Activated T-helper 1 cell treated with anti-CD3 and anti-CD28 coated beads, Interleukin-12 subunit alpha, Interleukin-12 subunit beta, Interleukin-2, Interleukin-4 antibody, amounts not matched to agents 30 ng/mL and 10 ng/mL and 1 ng/mL, durations not matched to agents 14 hours and 24 hours and 36 hours (primary cell): ENCODE measurements at regions of chr12 and their contacts with region 1.

Region 1: DNA sequence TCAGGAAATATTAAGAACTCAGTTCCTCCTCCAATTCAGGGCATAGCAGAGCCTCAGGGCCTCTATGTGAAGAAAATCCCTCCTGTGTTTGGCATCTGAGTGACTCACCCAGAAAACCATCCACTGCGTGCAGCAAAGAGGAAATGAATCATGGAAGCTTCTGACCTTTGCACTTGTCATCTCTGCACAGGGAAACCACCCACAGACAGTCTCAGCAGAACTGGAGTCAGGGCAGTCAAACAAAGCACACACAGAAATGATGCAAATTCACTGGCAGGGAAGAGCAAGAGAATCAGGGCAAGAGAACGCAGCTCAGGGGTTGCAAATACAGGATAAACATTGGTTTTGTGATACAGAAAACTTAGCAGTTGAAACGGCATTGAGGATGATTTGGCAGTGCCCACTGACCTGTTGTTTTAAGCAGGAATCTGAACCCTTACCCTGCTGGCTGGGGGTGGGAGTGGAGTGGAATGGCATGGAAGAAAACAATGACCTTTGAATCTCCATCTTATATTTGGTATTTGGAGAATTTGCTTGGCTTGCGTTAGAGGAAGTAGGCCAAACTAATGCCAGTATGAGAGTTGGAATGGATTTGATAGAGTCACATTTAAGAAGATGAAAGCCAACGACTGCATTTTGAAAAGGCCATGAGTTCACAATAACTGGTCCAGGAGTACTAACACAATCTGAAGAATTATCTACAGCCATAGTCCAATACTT is 53.5 kb downstream of the PHLDA1 start:
- DNase-seq: peak; percentile 81
- H3K4me3 Mint-ChIP-seq: peak overlapping the region; percentile 38
- H3K27ac Mint-ChIP-seq: peak overlapping the region; percentile 94
- H3K4me1 Mint-ChIP-seq: peaks cover 77% of the 10 kb centered on the region
- H3K27me3 Mint-ChIP-seq: no peaks in the 10 kb centered on the region

Region 2: DNA sequence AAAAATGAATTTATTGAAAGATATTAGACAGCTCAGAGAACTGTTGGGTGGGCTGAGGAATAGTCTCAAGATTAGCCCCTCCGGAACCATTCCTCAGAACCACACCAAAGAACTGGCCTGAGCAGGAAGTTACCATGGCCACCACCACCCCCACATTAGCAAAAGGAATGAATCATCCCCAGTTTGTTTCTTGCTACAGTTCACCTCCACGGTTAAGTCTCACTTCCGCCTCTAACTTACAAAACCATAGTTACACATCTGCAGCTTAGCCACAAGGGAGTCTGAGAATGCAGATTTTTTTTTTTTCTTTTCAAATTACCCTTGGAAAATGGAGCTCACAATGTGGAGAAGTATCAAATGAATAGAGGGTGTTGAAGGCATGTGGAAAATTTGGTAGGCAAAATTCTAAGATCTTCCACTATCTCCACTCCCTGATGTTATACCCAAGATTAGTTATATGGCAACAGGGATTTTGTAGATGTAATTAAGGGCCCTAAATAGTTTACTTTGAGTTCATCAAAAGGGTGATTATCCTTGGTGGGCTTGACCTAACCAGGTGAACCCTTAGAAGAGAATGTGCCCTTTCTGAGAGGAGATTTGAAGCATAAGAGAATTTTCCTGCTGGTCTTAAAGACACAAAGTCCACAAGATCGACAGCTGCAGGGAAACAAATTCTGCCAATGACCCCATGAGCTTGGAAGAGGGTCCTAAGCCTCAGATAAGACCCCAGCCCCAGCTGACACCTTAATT is 336.9 kb before region 1 on chr12:
- intact Hi-C with region 1: loop called (anchors 1 kb)
- DNase-seq: peak; percentile 32
- H3K4me3 Mint-ChIP-seq: peak overlapping the region; percentile 19
- H3K27ac Mint-ChIP-seq: peak overlapping the region; percentile 89
- H3K4me1 Mint-ChIP-seq: peaks cover 34% of the 10 kb centered on the region
- H3K27me3 Mint-ChIP-seq: no peaks in the 10 kb centered on the region

Region 3: DNA sequence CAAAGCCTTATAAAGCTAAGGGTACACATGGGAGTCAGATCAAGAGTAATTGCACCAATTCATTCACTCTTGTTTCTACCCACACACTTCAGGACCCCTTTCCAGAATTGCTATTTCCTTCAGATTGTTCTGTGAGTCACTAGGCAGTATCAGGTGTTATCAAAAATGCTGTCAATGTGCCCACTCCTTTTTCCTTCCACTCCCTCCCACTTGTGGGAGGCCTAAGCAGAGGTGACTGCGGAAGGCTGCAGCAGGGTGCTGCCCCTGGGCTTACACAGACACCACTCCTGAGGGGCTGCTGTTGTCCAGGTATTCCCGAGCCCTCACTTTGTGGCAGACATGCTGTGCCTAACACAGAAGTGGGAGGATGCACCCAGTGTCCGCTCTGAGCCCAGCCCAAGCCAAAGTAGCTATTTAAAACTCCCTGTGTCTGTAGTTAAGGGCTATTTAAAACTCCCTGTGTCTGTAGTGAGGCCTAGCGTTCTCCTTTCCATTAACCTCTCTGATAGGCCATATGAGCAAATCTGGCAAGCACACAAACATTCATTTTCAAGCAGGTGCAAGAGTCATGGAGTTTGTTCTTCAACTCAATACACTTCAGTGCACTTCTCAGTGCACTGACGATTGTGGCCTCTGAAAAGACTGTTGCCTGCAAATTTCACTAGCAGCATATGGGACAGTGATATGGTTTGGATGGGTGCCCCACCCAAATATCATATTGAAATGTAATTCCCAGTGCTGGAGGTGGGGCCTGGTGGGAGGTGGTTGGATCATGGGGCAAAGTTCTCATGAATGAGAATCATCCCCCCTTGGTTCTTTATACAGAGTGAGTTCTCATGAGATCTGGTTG is 64.4 kb before region 1 on chr12:
- intact Hi-C with region 1: loop called (anchors 1 kb)
- DNase-seq: no peak
- H3K4me3 Mint-ChIP-seq: no peak overlapping the region
- H3K27ac Mint-ChIP-seq: peak overlapping the region; percentile 79
- H3K4me1 Mint-ChIP-seq: peaks cover 34% of the 10 kb centered on the region
- H3K27me3 Mint-ChIP-seq: peaks cover 1% of the 10 kb centered on the region

Region 4: GRCh38 chr12:75944097-75944904 is 33.8 kb before region 1 on chr12:
- intact Hi-C with region 1: loop called (anchors 1 kb)
- DNase-seq: peak; percentile 27
- H3K4me3 Mint-ChIP-seq: peak overlapping the region; percentile 65
- H3K27ac Mint-ChIP-seq: peak overlapping the region; percentile 98
- H3K4me1 Mint-ChIP-seq: peaks cover 30% of the 10 kb centered on the region
- H3K27me3 Mint-ChIP-seq: no peaks in the 10 kb centered on the region

Region 5: GRCh38 chr12:76031537-76032073 is 53.5 kb after region 1 on chr12 and contains the start of gene PHLDA1:
- intact Hi-C with region 1: loop called (anchors 1 kb)
- DNase-seq: peak; percentile 95
- H3K4me3 Mint-ChIP-seq: peak within 1 kb of the TSS; percentile 99
- H3K27ac Mint-ChIP-seq: peak within 1 kb of the TSS; percentile 99
- H3K4me1 Mint-ChIP-seq: peaks cover 34% of the 10 kb centered on the region
- H3K27me3 Mint-ChIP-seq: peaks cover 3% of the 10 kb centered on the region
- total RNA-seq, gene PHLDA1: 88.9 and 91.5 TPM in 2 replicates

Region 6: GRCh38 chr12:76055393-76055792 is 77.3 kb after region 1 on chr12:
- intact Hi-C with region 1: no loop called
- DNase-seq: no peak
- H3K4me3 Mint-ChIP-seq: no peak overlapping the region
- H3K27ac Mint-ChIP-seq: no peak overlapping the region
- H3K4me1 Mint-ChIP-seq: peaks cover 15% of the 10 kb centered on the region
- H3K27me3 Mint-ChIP-seq: no peaks in the 10 kb centered on the region